B cell (primary cell): ENCODE measurements at regions of chr5 and their contacts with region 1.

Region 1: GRCh38 chr5:123496892-123497291 is 15.1 kb upstream of the CSNK1G3 start:
- DNase-seq: no peak
- ATAC-seq: no peak
- H3K4me3 ChIP-seq: no peak overlapping the region
- H3K4me3 Mint-ChIP-seq: no peak overlapping the region
- H3K27ac ChIP-seq: no peak overlapping the region
- H3K27ac Mint-ChIP-seq: no peak overlapping the region
- H3K4me1 ChIP-seq: no peaks in the 10 kb centered on the region
- H3K4me1 Mint-ChIP-seq: no peaks in the 10 kb centered on the region
- H3K27me3 ChIP-seq: no peaks in the 10 kb centered on the region
- H3K27me3 Mint-ChIP-seq: peaks cover 6% of the 10 kb centered on the region
- CTCF ChIP-seq: no peak

Region 2: GRCh38 chr5:123448017-123448617 is 48.8 kb before region 1 on chr5:
- CTCF ChIA-PET with region 1: no interaction called
- POLR2A ChIA-PET with region 1: no interaction called
- intact Hi-C with region 1: loop called (anchors 5 kb)
- DNase-seq: peak; percentile 17
- ATAC-seq: peak; percentile 17
- H3K4me3 ChIP-seq: no peak overlapping the region
- H3K4me3 Mint-ChIP-seq: peak overlapping the region; percentile 35
- H3K27ac ChIP-seq: no peak overlapping the region
- H3K27ac Mint-ChIP-seq: no peak overlapping the region
- H3K4me1 ChIP-seq: no peaks in the 10 kb centered on the region
- H3K4me1 Mint-ChIP-seq: peaks cover 15% of the 10 kb centered on the region
- H3K27me3 ChIP-seq: no peaks in the 10 kb centered on the region
- H3K27me3 Mint-ChIP-seq: peaks cover 3% of the 10 kb centered on the region
- CTCF ChIP-seq: no peak